ENCODE measurements at regions of chr21 and their contacts with region 1.

Region 1: GRCh38 chr21:41507496-41508299 is at the start of gene TMPRSS2:
- DNase-seq: peak; percentile 35 to 55
- H3K4me3 ChIP-seq: peak within 1 kb of the TSS; percentile 61
- H3K27ac ChIP-seq: no peak within 1 kb of the TSS
- H3K4me1 ChIP-seq: no peaks in the 10 kb centered on the region
- H3K27me3 ChIP-seq: no peaks in the 10 kb centered on the region; the same call in 1 of the 2 replicates
- CTCF ChIP-seq: no peak
- total RNA-seq, gene TMPRSS2: 0.61 and 0.78 TPM in 2 replicates

Region 2: GRCh38 chr21:41349619-41350390 is 157.9 kb before region 1 on chr21:
- CTCF ChIA-PET with region 1: no interaction called
- POLR2A ChIA-PET with region 1: no interaction called
- intact Hi-C with region 1: no loop called
- DNase-seq: no peak
- H3K4me3 ChIP-seq: no peak overlapping the region
- H3K27ac ChIP-seq: no peak overlapping the region
- H3K4me1 ChIP-seq: no peaks in the 10 kb centered on the region
- H3K27me3 ChIP-seq: no peaks in the 10 kb centered on the region; the same call in 1 of the 2 replicates
- CTCF ChIP-seq: no peak

Region 3: DNA sequence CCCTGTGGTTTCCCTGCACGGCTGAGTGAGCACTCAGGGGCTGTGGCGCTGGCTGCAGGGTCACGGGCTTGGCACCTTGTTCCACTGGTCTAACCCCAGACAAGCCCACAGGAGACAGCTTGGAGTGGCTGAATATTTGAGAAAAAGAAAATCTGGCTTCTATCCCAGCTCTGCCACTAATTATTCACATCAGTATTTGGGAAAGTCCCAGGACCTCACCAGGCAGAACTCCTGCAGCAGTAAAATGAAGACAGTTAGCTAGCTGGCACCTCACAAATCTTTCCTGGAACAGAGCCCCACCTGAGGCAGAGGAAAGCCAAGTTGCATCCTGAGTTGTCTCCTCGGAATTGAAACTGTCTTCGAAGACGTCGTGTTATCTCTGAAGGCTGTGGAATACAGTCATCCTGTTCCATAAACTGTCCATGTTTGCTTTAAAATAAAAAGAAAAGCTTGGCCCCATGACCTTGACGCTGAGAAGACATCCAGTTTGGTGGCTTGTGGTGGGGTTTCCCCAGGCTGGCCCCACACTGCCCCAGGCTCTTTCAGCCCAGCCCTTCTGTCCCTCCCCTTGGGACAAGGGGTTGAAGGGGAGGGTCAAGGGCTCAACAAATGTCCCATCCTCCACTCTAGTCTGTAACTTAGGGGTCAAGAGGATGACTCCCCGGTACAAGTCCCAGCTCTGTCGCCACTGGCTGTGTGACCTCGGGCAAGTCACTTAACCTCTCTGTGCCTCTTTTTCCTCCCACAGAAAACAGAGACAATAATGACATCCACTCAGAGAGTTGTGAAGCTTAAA is 94.1 kb after region 1 on chr21:
- CTCF ChIA-PET with region 1: no interaction called
- POLR2A ChIA-PET with region 1: no interaction called
- intact Hi-C with region 1: loop called (anchors 10 kb)
- DNase-seq: no peak
- H3K4me3 ChIP-seq: no peak overlapping the region
- H3K27ac ChIP-seq: no peak overlapping the region
- H3K4me1 ChIP-seq: peaks cover 19% of the 10 kb centered on the region
- H3K27me3 ChIP-seq: no peaks in the 10 kb centered on the region
- CTCF ChIP-seq: no peak

Region 4: DNA sequence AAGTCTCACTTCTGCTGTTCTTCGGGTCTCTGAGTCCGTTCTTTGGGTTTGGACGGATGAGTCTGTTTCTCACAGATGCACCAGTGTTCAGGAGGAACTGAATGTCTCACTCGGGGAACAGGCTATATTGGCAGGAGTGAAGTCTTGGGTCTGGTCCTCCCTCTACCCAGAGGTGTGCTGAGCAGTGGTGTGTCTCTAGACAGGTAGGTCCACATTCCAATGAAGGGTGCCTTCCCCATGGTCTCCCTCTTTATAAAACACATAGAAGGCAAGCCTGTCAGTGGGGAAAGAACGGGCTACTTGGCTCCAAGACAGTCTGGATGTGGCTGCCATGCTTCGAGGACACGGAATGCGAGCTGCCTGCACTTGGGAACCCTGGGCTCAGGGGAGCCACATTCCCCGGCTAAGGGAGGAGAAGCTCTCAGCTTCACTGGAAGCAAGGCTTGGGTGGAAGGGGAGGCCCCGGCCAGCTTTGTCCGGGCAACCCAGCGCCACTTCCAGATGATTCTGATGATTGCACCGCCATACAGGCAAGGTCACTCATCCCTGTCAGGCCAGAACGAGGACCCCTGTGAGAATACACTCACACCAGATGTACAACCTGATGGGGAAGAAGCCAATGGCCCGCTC is 288.9 kb after region 1 on chr21:
- CTCF ChIA-PET with region 1: interaction called, 10 read pairs
- POLR2A ChIA-PET with region 1: no interaction called
- intact Hi-C with region 1: no loop called
- DNase-seq: peak in 1 of 2 experiments; percentile 39
- H3K4me3 ChIP-seq: no peak overlapping the region
- H3K27ac ChIP-seq: no peak overlapping the region
- H3K4me1 ChIP-seq: no peaks in the 10 kb centered on the region
- H3K27me3 ChIP-seq: no peaks in the 10 kb centered on the region
- CTCF ChIP-seq: no peak